ENCODE measurements at regions of chr11 and their contacts with region 1.

Region 1: GRCh38 chr11:32052218-32052617 is 38.7 kb upstream of the RCN1 start:
- DNase-seq: peak; percentile 49
- ATAC-seq: peak; percentile 90
- H3K4me3 ChIP-seq: no peak overlapping the region
- H3K27ac ChIP-seq: no peak overlapping the region
- H3K4me1 ChIP-seq: peaks cover 0 to 5% of the 10 kb centered on the region in 2 experiments; a peak in 1 of 4 replicates
- H3K27me3 ChIP-seq: no peaks in the 10 kb centered on the region; the same call in 1 of the 2 replicates
- CTCF ChIP-seq: peak; percentile 60 to 94 (median 79)
- POLR2A ChIP-seq: no peak
- RAD21 ChIP-seq: peak; percentile 86

Region 2: DNA sequence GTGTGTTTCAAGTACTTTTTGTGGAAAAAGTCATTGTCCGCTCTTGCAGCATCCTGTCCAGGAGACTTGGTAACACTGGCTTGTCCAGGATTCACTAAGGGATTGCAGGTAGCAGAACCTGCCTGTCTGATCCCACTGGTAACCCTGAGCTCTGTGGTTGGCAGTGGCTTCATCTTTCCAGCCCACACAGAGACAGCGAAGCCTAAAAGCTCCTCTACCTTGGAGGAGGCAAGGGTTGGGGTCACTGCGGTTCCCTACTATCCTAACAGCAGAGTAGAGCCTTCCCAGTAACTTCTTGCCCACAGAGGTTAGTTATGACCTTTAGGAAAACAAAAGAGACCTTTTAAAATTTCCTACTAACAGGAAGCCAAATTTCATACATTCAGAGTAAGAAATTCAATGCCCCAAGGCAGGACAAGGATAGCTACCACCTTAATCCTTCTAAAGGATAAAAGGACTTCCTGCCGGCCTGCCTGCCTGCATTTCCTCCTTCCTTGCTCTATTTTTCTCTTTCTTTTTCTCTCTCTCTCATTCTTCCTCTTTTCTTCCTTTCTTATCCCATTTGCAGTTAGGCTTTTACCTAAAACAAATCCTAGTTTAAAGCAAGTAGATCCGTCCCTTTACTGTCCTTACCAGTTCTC is 30.2 kb after region 1 on chr11:
- CTCF ChIA-PET with region 1: no interaction called
- POLR2A ChIA-PET with region 1: no interaction called
- RAD21 ChIA-PET with region 1: no interaction called
- intact Hi-C with region 1: no loop called
- DNase-seq: no peak
- ATAC-seq: no peak
- H3K4me3 ChIP-seq: no peak overlapping the region
- H3K27ac ChIP-seq: no peak overlapping the region
- H3K4me1 ChIP-seq: peaks cover 1 to 8% of the 10 kb centered on the region in 2 experiments
- H3K27me3 ChIP-seq: no peaks in the 10 kb centered on the region
- CTCF ChIP-seq: no peak
- POLR2A ChIP-seq: no peak
- RAD21 ChIP-seq: no peak

Region 3: GRCh38 chr11:32154275-32154674 is 102.1 kb after region 1 on chr11:
- CTCF ChIA-PET with region 1: interaction called, 6 read pairs
- POLR2A ChIA-PET with region 1: no interaction called
- RAD21 ChIA-PET with region 1: interaction called in 1 of 2 experiments, 3 read pairs
- intact Hi-C with region 1: loop called (anchors 1 kb)
- DNase-seq: peak; percentile 51
- ATAC-seq: peak; percentile 93
- H3K4me3 ChIP-seq: no peak overlapping the region
- H3K27ac ChIP-seq: no peak overlapping the region
- H3K4me1 ChIP-seq: 0 out of 4 replicates have a peak, but pooled peaks cover 0 to 2% of the 10 kb centered on the region in 2 experiments
- H3K27me3 ChIP-seq: no peaks in the 10 kb centered on the region
- CTCF ChIP-seq: peak; percentile 49 to 97 (median 55)
- POLR2A ChIP-seq: no peak
- RAD21 ChIP-seq: peak; percentile 89

Region 4: DNA sequence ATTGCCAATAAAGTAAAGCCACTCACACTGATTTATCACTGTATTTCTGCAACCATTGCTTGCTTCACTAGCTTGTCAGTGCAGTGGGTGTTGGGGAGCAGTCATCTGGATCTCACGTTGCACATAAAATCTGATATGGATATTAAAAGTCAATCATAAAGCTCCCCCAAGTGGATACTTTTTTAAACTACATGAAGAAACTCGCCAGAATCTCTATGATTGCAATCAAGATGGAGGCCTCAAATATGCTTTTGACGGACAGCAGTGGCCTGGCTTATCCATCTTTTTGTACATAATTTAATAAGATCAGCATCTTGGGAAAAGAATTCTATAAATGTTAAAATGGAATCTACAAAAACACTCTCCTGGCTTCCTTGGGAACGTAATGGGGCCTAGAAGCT is 245.4 kb after region 1 on chr11:
- CTCF ChIA-PET with region 1: no interaction called
- POLR2A ChIA-PET with region 1: no interaction called
- RAD21 ChIA-PET with region 1: no interaction called
- intact Hi-C with region 1: loop called (anchors 2 kb)
- DNase-seq: peak; percentile 31
- ATAC-seq: peak; percentile 84
- H3K4me3 ChIP-seq: no peak overlapping the region
- H3K27ac ChIP-seq: no peak overlapping the region
- H3K4me1 ChIP-seq: no peaks in the 10 kb centered on the region
- H3K27me3 ChIP-seq: no peaks in the 10 kb centered on the region
- CTCF ChIP-seq: peak; percentile 26 to 58 (median 53); a peak in 4 of 6 replicates
- POLR2A ChIP-seq: no peak
- RAD21 ChIP-seq: peak; percentile 69

Measured in HCT116 (cell line).